ENCODE measurements at regions of chr12 and their contacts with region 1.

Region 1: DNA sequence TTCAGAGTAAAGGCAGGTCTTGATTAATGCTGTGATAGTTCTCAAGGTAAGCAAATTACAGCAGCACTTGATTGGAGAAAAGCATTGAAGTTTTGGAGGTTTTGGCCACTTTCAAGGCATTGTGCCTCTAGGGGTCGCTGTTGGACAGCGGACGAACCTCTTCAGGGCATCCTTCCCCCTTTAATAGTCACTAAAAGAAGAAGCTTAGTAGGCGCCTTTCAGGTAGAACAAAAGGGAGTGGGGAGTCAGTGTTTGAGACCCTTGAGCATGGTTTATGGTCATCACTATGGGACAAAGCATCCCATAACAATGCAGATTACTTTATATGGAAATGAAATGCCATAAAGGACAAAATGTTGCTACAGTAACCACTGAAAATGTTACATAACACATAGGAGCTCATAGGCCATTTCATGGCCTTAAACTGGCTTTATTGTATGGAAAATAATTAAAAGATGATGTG is 199.5 kb upstream of the DCN start:
- DNase-seq: peak; percentile 89
- H3K4me3 Mint-ChIP-seq: peak overlapping the region; percentile 48
- H3K27ac Mint-ChIP-seq: peak overlapping the region; percentile 64
- H3K4me1 Mint-ChIP-seq: peaks cover 15% of the 10 kb centered on the region
- H3K27me3 Mint-ChIP-seq: no peaks in the 10 kb centered on the region
- CTCF ChIP-seq: peak; percentile 87

Region 2: DNA sequence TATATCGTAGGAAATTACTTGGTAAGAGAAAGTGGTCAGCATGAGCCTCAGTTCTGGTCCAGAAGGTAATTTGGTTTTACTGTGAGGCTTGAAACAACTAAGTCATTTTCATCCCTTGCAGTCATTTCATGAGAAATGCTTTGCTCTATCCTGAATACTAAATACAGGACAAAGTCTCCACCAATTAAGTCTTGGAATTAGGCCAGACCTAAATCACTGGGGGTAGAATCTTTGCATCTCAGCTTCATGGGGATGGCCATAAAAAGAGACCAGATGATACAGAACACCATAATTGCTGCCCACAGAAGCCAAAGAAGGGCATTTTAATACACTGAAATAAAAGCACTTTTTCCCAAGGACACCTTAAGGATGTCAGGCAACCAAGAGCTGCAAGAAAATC is 78.4 kb after region 1 on chr12:
- CTCF ChIA-PET with region 1: no interaction called
- intact Hi-C with region 1: no loop called
- DNase-seq: no peak
- H3K4me3 Mint-ChIP-seq: no peak overlapping the region
- H3K27ac Mint-ChIP-seq: no peak overlapping the region
- H3K4me1 Mint-ChIP-seq: no peaks in the 10 kb centered on the region
- H3K27me3 Mint-ChIP-seq: no peaks in the 10 kb centered on the region
- CTCF ChIP-seq: no peak

Region 3: GRCh38 chr12:91577586-91578539 is 195.8 kb after region 1 on chr12:
- CTCF ChIA-PET with region 1: no interaction called
- intact Hi-C with region 1: loop called (anchors 5 kb)
- DNase-seq: no peak
- H3K4me3 Mint-ChIP-seq: peak overlapping the region; percentile 54
- H3K27ac Mint-ChIP-seq: peak overlapping the region; percentile 50
- H3K4me1 Mint-ChIP-seq: no peaks in the 10 kb centered on the region
- H3K27me3 Mint-ChIP-seq: no peaks in the 10 kb centered on the region
- CTCF ChIP-seq: peak; percentile 43

Region 4: DNA sequence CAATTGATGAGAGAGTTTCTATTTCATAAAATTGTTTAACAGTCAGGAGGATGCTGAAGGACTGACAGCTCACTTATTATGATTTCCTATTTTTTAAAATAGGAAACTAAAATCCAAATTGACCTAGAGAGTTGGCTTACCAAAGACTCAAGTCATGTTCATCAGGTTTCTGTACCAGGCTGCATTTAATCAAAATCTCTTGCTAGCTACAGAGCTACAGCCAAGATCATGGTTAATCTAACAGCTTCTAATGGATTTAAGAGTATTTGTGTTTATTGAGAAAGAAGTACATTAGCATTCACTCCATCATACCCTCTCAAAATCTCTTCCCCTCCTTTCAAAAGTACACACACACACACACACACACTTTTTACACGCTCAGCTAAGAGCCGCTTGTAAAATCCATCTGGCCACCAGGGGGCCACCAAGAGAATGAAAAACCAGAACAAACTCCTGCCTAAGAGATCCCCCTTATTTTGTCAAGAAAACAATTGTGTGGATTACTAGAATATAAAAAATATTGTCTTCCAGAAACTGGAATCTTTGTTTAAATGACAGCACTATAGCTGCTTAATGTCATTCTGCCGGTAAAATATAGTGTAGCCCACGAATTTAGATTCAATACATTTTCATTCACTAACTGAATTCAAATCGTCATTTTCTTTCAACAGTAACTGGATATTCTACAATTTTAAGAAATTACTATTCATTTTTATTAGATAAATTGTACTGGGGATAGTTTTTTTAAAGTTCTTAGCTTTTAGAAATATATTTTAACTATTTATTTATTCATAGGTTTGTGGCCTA is 429.6 kb after region 1 on chr12:
- CTCF ChIA-PET with region 1: interaction called, 12 read pairs
- intact Hi-C with region 1: loop called (anchors 10 kb)
- DNase-seq: peak; percentile 82
- H3K4me3 Mint-ChIP-seq: no peak overlapping the region
- H3K27ac Mint-ChIP-seq: no peak overlapping the region
- H3K4me1 Mint-ChIP-seq: no peaks in the 10 kb centered on the region
- H3K27me3 Mint-ChIP-seq: no peaks in the 10 kb centered on the region
- CTCF ChIP-seq: peak; percentile 90

Region 5: DNA sequence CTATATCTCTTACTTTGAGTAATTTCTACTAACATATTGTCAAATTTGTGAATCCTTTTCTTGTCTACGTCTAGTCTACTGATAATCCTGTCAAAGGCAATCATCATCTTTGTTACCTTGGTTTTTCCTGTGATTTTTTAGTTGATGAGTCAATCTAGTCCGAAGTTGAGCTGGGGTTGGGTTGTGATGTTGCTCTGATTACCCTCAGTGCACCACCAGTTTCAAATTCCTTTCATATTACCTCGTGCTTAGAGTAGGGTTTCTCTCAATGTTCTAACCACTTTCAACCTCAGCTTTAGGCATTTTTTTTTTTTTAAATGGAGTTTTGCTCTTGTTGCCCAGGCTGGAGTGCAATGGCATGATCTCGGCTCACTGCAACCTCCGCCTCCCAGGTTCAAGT is 576.7 kb after region 1 on chr12:
- CTCF ChIA-PET with region 1: no interaction called
- intact Hi-C with region 1: loop called (anchors 10 kb)
- DNase-seq: no peak
- H3K4me3 Mint-ChIP-seq: no peak overlapping the region
- H3K27ac Mint-ChIP-seq: no peak overlapping the region
- H3K4me1 Mint-ChIP-seq: peaks cover 12% of the 10 kb centered on the region
- H3K27me3 Mint-ChIP-seq: no peaks in the 10 kb centered on the region
- CTCF ChIP-seq: no peak

Region 6: GRCh38 chr12:92078167-92079053 is 696.3 kb after region 1 on chr12:
- CTCF ChIA-PET with region 1: no interaction called
- intact Hi-C with region 1: loop called (anchors 2 kb)
- DNase-seq: no peak
- H3K4me3 Mint-ChIP-seq: no peak overlapping the region
- H3K27ac Mint-ChIP-seq: peak overlapping the region; percentile 75
- H3K4me1 Mint-ChIP-seq: peaks cover 80% of the 10 kb centered on the region
- H3K27me3 Mint-ChIP-seq: no peaks in the 10 kb centered on the region
- CTCF ChIP-seq: no peak

Region 7: GRCh38 chr12:92505254-92506231 is 1123.4 kb after region 1 on chr12:
- CTCF ChIA-PET with region 1: interaction called, 3 read pairs
- intact Hi-C with region 1: loop called (anchors 5 kb)
- DNase-seq: peak; percentile 27
- H3K4me3 Mint-ChIP-seq: peak overlapping the region; percentile 53
- H3K27ac Mint-ChIP-seq: peak overlapping the region; percentile 62
- H3K4me1 Mint-ChIP-seq: peaks cover 48% of the 10 kb centered on the region
- H3K27me3 Mint-ChIP-seq: no peaks in the 10 kb centered on the region
- CTCF ChIP-seq: no peak

Region 8: GRCh38 chr12:92649511-92650227 is 1267.6 kb after region 1 on chr12:
- CTCF ChIA-PET with region 1: interaction called, 15 read pairs
- intact Hi-C with region 1: loop called (anchors 5 kb)
- DNase-seq: peak; percentile 78
- H3K4me3 Mint-ChIP-seq: peak overlapping the region; percentile 54
- H3K27ac Mint-ChIP-seq: peak overlapping the region; percentile 71
- H3K4me1 Mint-ChIP-seq: peaks cover 47% of the 10 kb centered on the region
- H3K27me3 Mint-ChIP-seq: no peaks in the 10 kb centered on the region
- CTCF ChIP-seq: peak; percentile 63